ENCODE measurements at regions of chr20 and their contacts with region 1.

Region 1: DNA sequence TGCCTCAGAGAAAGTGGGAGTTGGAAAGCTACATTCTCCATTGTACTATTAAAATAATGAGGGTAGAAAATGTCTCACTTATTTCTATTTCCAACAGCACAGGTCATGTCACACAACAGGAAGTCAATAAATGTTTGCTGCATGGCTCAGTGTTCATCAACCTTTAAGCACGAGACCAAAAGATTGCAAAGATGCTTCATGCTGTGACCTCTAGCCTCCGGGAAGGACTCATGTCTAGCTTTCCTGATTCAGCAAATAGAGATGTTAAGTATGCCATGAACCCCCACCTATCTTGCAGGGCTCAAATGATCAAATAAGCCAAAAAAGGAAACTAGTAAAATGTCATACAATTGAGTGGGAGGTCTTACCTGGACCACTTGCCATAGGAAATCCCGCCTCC is 57.4 kb downstream of the NCOA6 start:
- DNase-seq: no peak
- ATAC-seq: no peak
- H3K4me3 Mint-ChIP-seq: no peak overlapping the region
- H3K27ac Mint-ChIP-seq: no peak overlapping the region
- H3K4me1 Mint-ChIP-seq: no peaks in the 10 kb centered on the region
- H3K27me3 Mint-ChIP-seq: no peaks in the 10 kb centered on the region
- CTCF ChIP-seq: no peak

Region 2: DNA sequence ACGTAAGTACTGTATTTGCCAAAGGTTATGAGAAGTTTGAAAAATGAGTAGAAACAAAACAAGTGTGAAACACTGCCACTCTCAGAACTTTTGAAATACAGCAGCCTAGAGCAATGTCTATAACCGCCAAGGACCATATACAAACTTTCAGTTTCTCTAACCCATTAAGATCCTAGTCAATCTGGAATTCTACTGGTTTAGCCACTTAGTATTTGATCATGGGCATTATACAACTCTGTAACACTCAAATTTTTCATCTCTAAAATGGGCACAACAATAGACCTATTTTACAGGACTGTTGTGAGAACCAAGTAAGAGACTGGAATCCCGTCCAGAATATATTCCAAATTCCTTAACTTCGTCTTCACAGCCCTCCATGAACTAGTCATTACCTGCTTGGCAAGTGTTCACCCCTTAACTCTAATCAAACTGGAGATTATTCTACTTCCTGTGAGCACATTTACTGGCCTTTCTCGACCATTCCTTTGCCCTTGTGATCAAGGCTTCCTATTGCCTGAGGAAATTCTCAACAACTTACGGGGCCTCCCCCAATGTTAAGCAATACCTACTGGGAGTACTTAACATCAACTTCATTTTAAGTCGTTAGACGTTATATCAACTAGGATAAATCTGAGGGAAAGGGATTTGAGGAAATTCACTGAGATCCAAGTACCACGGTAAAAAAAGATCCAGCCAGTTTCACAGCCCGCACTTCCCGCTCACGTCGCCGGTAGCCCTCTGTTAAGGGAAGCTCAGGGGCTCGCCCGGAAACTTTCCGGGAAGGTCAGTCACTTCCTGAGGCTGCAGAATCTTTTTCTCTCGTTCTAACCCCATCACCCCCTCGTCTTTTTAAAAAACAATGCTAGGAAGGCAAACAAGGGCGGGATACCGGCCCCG is 657.1 kb before region 1 on chr20:
- CTCF ChIA-PET with region 1: no interaction called
- POLR2A ChIA-PET with region 1: no interaction called
- DNase-seq: no peak
- ATAC-seq: no peak
- H3K4me3 Mint-ChIP-seq: peak overlapping the region; percentile 94
- H3K27ac Mint-ChIP-seq: peak overlapping the region; percentile 99
- H3K4me1 Mint-ChIP-seq: peaks cover 38% of the 10 kb centered on the region
- H3K27me3 Mint-ChIP-seq: peaks cover 2% of the 10 kb centered on the region
- CTCF ChIP-seq: no peak

Region 3: GRCh38 chr20:34538671-34539123 is 229.4 kb before region 1 on chr20:
- CTCF ChIA-PET with region 1: interaction called, 14 read pairs
- POLR2A ChIA-PET with region 1: interaction called, 3 read pairs
- DNase-seq: peak; percentile 72
- ATAC-seq: peak; percentile 70
- H3K4me3 Mint-ChIP-seq: no peak overlapping the region
- H3K27ac Mint-ChIP-seq: peak overlapping the region; percentile 49; the same call in 1 of the 2 replicates
- H3K4me1 Mint-ChIP-seq: peaks cover under 1% of the 10 kb centered on the region; the same call in 1 of the 2 replicates
- H3K27me3 Mint-ChIP-seq: no peaks in the 10 kb centered on the region
- CTCF ChIP-seq: peak; percentile 60

Region 4: GRCh38 chr20:34621383-34622367 is 146.4 kb before region 1 on chr20:
- CTCF ChIA-PET with region 1: no interaction called
- POLR2A ChIA-PET with region 1: no interaction called
- DNase-seq: no peak
- ATAC-seq: no peak
- H3K4me3 Mint-ChIP-seq: no peak overlapping the region
- H3K27ac Mint-ChIP-seq: peak overlapping the region; percentile 38
- H3K4me1 Mint-ChIP-seq: no peaks in the 10 kb centered on the region
- H3K27me3 Mint-ChIP-seq: no peaks in the 10 kb centered on the region
- CTCF ChIP-seq: no peak

Region 5: GRCh38 chr20:34704177-34705007 is 63.7 kb before region 1 on chr20 and contains the start of gene TP53INP2:
- CTCF ChIA-PET with region 1: interaction called, 17 read pairs
- POLR2A ChIA-PET with region 1: no interaction called
- DNase-seq: peak; percentile 93
- ATAC-seq: peak; percentile 60
- H3K4me3 Mint-ChIP-seq: peak within 1 kb of the TSS; percentile 94
- H3K27ac Mint-ChIP-seq: peak within 1 kb of the TSS; percentile 87
- H3K4me1 Mint-ChIP-seq: peaks cover 17% of the 10 kb centered on the region
- H3K27me3 Mint-ChIP-seq: peaks cover 50% of the 10 kb centered on the region
- CTCF ChIP-seq: no peak
- total RNA-seq, gene TP53INP2: 3.8 to 4.3 TPM (median 4.1 TPM) in 3 replicates

Region 6: GRCh38 chr20:34753706-34754461 is 14.2 kb before region 1 on chr20:
- CTCF ChIA-PET with region 1: interaction called, 15 read pairs
- POLR2A ChIA-PET with region 1: no interaction called
- DNase-seq: no peak
- ATAC-seq: no peak
- H3K4me3 Mint-ChIP-seq: no peak overlapping the region
- H3K27ac Mint-ChIP-seq: peak overlapping the region; percentile 81
- H3K4me1 Mint-ChIP-seq: peaks cover 13% of the 10 kb centered on the region
- H3K27me3 Mint-ChIP-seq: no peaks in the 10 kb centered on the region
- CTCF ChIP-seq: no peak

Region 7: GRCh38 chr20:34797012-34797995 is 29.2 kb after region 1 on chr20:
- CTCF ChIA-PET with region 1: interaction called, 11 read pairs
- POLR2A ChIA-PET with region 1: no interaction called
- DNase-seq: no peak
- ATAC-seq: no peak
- H3K4me3 Mint-ChIP-seq: no peak overlapping the region
- H3K27ac Mint-ChIP-seq: no peak overlapping the region
- H3K4me1 Mint-ChIP-seq: no peaks in the 10 kb centered on the region
- H3K27me3 Mint-ChIP-seq: no peaks in the 10 kb centered on the region
- CTCF ChIP-seq: no peak